OCI-LY7 (cell line): ENCODE measurements at regions of chr14 and their contacts with region 1.

Region 1: DNA sequence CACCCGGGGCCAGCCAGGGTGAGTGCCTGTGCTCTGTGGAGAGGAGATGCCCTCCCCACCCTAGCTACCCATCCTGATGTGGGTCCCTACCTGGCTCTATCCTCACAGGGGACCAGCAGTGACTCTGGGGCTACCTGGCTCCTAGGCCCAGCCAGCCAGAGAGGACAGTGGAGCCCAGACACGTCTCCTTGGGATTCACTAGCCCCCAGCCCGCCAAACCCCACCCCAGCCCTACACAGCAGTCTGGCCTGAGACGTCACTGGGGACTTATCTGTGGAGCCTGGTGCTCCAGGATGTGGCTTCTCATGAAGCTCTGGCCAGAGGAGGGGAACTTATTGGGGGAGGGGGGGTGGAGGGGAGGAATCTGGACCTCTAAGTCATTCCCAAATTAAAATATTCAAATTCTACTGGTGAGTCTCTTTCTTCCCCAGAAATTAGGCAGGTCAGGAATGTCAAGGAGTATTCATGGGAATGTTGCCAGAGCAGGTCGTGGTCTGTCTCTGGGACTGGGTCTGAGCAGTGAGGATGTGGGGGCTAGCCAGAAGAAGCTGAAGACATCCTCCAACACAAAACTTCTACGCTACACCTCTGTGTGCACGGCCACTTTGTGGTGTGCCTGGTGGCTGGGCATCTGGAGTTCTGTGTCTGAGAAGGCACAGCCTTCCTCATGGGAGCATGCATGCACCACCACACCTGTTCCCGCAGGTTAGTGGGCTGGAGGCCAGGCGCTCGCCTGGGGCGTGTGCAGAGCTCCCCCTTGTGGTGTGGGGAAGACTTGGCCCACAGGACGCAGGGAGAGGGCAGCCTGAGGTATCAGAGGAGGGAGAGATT is 2.7 kb downstream of the CMTM5 start:
- DNase-seq: peak; percentile 66
- H3K4me3 ChIP-seq: no peak overlapping the region
- H3K27ac ChIP-seq: no peak overlapping the region
- H3K4me1 ChIP-seq: no peaks in the 10 kb centered on the region
- CTCF ChIP-seq: peak; percentile 89

Region 2: GRCh38 chr14:22994762-22995275 is 384.8 kb before region 1 on chr14:
- CTCF ChIA-PET with region 1: no interaction called
- POLR2A ChIA-PET with region 1: no interaction called
- intact Hi-C with region 1: no loop called
- DNase-seq: peak; percentile 60
- H3K4me3 ChIP-seq: no peak overlapping the region
- H3K27ac ChIP-seq: no peak overlapping the region
- H3K4me1 ChIP-seq: peaks cover 4% of the 10 kb centered on the region
- CTCF ChIP-seq: peak; percentile 87

Region 3: DNA sequence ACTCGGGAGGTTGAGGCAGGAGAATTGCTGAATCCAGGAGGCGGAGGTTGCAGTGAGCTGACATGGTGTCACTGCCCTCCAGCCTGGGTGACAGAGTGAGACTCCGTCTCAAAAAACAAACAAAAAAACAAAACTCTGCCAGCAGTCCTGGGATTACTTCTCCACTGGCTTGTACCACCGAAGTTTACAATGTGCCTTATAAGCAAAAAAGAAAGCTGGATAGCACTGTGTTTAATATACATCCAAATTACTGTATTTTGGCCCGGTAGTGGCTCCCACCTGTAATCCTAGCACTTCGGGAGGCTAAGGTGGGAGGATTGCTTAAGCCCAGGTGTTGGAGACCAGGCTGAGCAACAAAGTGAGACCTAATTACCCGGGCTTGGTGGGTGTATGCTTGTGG is 110.4 kb before region 1 on chr14:
- CTCF ChIA-PET with region 1: no interaction called
- POLR2A ChIA-PET with region 1: no interaction called
- intact Hi-C with region 1: loop called (anchors 1 kb)
- DNase-seq: no peak
- H3K4me3 ChIP-seq: no peak overlapping the region
- H3K27ac ChIP-seq: no peak overlapping the region
- H3K4me1 ChIP-seq: no peaks in the 10 kb centered on the region
- CTCF ChIP-seq: no peak

Region 4: GRCh38 chr14:23327947-23328744 is 51.4 kb before region 1 on chr14:
- CTCF ChIA-PET with region 1: interaction called, 4 read pairs
- POLR2A ChIA-PET with region 1: no interaction called
- intact Hi-C with region 1: loop called (anchors 1 kb)
- DNase-seq: peak; percentile 78
- H3K4me3 ChIP-seq: no peak overlapping the region
- H3K27ac ChIP-seq: no peak overlapping the region
- H3K4me1 ChIP-seq: peaks cover 7% of the 10 kb centered on the region
- CTCF ChIP-seq: peak; percentile 98